ENCODE measurements at regions of chr14 and their contacts with region 1.

Region 1: GRCh38 chr14:103367995-103368394 is 17.2 kb upstream of the MARK3 start:
- DNase-seq: no peak

Region 2: GRCh38 chr14:103353366-103353765 is 14.6 kb before region 1 on chr14:
- CTCF ChIA-PET with region 1: interaction called, 10 read pairs
- POLR2A ChIA-PET with region 1: no interaction called
- DNase-seq: no peak

Measured in HEK293T (cell line).